Left ventricle myocardium inferior (tissue), 1 donor: ENCODE measurements at regions of chr11 and their contacts with region 1.

Region 1: DNA sequence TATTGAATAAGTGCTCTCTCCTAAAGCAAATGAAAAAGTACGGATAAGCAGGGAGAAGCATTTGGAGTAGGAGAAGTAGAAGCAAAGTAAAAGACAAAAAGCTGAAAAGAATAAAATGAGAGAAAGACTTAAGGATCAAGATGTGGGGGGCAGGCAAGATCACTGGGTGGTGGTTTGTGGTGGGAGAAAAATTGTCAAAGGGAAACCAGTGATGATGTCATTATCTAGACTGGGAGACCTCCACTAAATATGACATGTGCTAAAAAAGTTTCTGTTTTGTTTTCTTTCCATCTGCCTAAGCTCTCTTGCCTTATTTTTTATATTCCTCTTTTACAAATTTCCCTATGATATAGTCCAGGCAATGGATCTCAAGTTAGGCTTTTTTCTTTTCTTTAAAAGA is 14.8 kb upstream of the MAML2 start:
- DNase-seq: no peak
- H3K4me3 ChIP-seq: no peak overlapping the region
- H3K27ac ChIP-seq: no peak overlapping the region
- H3K4me1 ChIP-seq: no peaks in the 10 kb centered on the region
- H3K27me3 ChIP-seq: no peaks in the 10 kb centered on the region
- CTCF ChIP-seq: no peak

Region 2: DNA sequence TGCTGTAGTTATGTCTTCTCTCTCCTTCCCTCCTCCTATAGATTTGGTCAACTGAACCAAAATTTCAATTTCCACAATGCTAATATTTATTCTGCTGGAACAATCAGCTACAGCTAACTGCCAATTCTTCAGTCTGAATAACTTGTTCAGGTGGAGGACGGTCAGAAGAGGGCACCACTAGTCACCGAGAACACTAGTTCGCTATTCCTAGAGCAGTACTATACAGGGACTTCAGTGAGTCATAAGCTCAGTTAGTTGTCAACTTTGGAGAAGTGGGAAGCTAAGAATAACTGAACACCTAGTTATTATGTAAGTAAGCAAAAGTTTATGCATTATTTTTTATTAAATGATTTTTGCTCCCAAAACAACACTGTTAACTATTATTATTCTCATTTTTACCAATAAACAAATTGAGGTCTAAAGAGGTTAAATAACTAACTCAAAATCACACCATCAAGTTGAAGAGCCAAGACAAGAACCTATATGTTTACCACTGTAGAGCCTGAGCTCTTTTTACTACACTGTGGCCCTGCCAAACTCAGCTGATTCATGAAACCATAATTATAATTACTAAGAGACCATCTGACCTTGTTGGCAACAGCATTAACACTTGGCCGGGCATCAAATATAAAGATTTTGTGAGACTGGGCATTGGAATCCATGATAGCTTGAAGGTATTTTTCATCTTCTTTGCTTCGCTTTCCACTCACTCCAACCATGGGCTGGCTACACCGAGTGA is 508.5 kb before region 1 on chr11:
- intact Hi-C with region 1: loop called (anchors 10 kb)
- DNase-seq: peak; percentile 18
- H3K4me3 ChIP-seq: no peak overlapping the region
- H3K27ac ChIP-seq: peak overlapping the region; percentile 30
- H3K4me1 ChIP-seq: peaks cover 12% of the 10 kb centered on the region
- H3K27me3 ChIP-seq: no peaks in the 10 kb centered on the region
- CTCF ChIP-seq: peak; percentile 61